ENCODE measurements at regions of chr7 and their contacts with region 1.

Region 1: DNA sequence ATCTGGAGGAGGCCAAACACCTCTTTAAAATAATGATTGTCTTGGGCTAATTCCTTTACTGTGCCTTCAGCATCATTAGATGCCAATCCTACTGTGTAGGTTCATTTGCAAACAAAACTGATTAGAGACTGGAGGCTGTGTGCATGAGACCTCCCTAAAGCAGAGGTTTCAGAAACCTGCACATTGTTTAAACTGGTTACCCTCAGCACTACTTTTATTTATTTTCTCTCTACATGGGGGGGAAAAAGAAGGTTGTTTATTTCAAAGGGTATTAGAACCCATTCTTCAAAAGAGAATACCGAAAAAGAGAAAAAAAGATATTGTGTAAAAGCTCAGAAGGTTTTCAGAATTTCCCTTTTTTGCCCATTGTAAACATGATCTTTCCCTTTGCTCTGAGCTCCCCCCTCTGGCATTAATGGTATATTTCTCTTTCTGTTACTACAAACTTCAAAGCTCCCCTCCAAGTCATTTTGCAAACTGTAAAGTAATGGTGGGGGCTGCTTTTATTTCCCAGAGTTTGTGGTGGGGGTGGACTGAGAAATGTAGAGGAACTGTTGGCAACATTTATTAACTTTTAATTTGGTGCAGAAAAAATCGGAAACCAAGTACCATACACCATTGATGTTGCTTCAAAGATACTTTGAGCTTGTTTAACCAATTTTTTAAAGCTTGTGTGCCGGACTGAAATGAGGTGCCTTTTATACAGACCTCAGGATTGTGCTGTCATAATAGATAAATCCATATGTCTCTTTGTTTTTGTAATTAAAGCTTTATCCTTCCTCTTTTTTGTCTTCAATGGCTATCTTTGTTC is 181.4 kb downstream of the EXOC4 start:
- DNase-seq: peak; percentile 49
- ATAC-seq: peak; percentile 73
- H3K4me3 ChIP-seq: no peak overlapping the region
- H3K27ac ChIP-seq: no peak overlapping the region
- H3K4me1 ChIP-seq: 0 out of 2 replicates have a peak, but pooled peaks cover 2% of the 10 kb centered on the region
- H3K27me3 ChIP-seq: no peaks in the 10 kb centered on the region
- CTCF ChIP-seq: peak; percentile 73
- POLR2A ChIP-seq: no peak
- RAD21 ChIP-seq: peak; percentile 87

Region 2: GRCh38 chr7:132709971-132710567 is 724.2 kb before region 1 on chr7:
- CTCF ChIA-PET with region 1: interaction called, 5 read pairs
- POLR2A ChIA-PET with region 1: no interaction called
- dilution Hi-C with region 1: no loop called
- in situ Hi-C with region 1: loop called (anchors 25 kb)
- intact Hi-C with region 1: loop called (anchors 1 kb)
- DNase-seq: peak; percentile 41
- ATAC-seq: peak; percentile 56
- H3K4me3 ChIP-seq: no peak overlapping the region
- H3K27ac ChIP-seq: no peak overlapping the region
- H3K4me1 ChIP-seq: no peaks in the 10 kb centered on the region
- H3K27me3 ChIP-seq: no peaks in the 10 kb centered on the region; the same call in 1 of the 2 replicates
- CTCF ChIP-seq: peak; percentile 58
- POLR2A ChIP-seq: no peak
- RAD21 ChIP-seq: peak; percentile 62

Region 3: DNA sequence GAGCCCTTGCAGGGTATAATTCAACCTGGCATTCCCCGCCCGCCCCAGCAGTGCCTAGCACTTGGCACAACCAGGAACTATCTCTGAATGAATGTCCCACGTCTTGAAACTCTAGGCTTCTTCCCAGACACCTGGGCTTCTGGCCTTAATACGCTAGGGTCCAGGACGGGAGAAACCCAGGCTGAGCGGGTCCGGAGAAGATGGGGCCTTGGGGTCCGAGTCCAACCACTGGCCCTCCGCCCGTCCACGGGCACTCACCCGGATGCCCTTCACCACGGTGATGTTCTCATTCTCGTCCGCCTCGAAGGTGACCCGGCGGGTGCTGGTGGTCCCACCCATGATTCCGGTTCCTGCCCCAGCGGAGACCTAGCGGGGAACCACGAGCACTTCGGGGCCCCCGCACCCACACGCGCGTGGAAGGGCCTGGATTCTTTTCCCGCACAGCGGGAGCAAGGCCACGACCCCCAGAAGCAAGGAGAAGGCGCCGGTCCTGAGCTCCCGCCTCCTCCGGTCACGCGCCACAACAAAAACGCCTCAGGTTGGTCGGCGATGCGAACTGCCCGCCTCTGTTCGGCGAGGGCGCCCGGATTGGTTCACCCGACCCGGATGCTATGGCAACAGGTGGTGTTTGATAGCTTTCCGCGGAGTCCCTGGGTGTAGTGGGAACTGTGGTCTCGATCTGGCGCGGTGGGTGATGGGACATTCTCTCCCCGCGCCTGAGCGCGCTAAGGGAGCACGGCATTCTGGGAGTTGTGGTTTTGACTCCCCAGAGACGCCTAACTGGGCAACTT is 352.5 kb before region 1 on chr7 and contains the start of gene CHCHD3:
- CTCF ChIA-PET with region 1: interaction called, 3 read pairs
- POLR2A ChIA-PET with region 1: no interaction called
- dilution Hi-C with region 1: no loop called
- in situ Hi-C with region 1: no loop called
- intact Hi-C with region 1: loop called (anchors 10 kb)
- DNase-seq: peak; percentile 98
- ATAC-seq: peak; percentile 99
- H3K4me3 ChIP-seq: peak within 1 kb of the TSS; percentile 79
- H3K27ac ChIP-seq: peak within 1 kb of the TSS; percentile 82
- H3K4me1 ChIP-seq: peaks cover 2% of the 10 kb centered on the region; the same call in 1 of the 2 replicates
- H3K27me3 ChIP-seq: no peaks in the 10 kb centered on the region
- CTCF ChIP-seq: no peak
- POLR2A ChIP-seq: peak; percentile 43; the same call in 1 of the 2 replicates
- RAD21 ChIP-seq: no peak
- total RNA-seq, gene CHCHD3: 122 and 141 TPM in 2 replicates

Region 4: GRCh38 chr7:133252858-133253518 is 181.3 kb before region 1 on chr7 and contains the start of gene EXOC4:
- CTCF ChIA-PET with region 1: no interaction called
- POLR2A ChIA-PET with region 1: no interaction called
- dilution Hi-C with region 1: no loop called
- in situ Hi-C with region 1: no loop called
- intact Hi-C with region 1: loop called (anchors 2 kb)
- DNase-seq: peak; percentile 97
- ATAC-seq: peak; percentile 100
- H3K4me3 ChIP-seq: peak within 1 kb of the TSS; percentile 84
- H3K27ac ChIP-seq: peak within 1 kb of the TSS; percentile 91
- H3K4me1 ChIP-seq: no peaks in the 10 kb centered on the region
- H3K27me3 ChIP-seq: no peaks in the 10 kb centered on the region
- CTCF ChIP-seq: no peak
- POLR2A ChIP-seq: peak; percentile 66
- RAD21 ChIP-seq: no peak
- total RNA-seq, gene EXOC4: 85.5 and 94.6 TPM in 2 replicates

Region 5: DNA sequence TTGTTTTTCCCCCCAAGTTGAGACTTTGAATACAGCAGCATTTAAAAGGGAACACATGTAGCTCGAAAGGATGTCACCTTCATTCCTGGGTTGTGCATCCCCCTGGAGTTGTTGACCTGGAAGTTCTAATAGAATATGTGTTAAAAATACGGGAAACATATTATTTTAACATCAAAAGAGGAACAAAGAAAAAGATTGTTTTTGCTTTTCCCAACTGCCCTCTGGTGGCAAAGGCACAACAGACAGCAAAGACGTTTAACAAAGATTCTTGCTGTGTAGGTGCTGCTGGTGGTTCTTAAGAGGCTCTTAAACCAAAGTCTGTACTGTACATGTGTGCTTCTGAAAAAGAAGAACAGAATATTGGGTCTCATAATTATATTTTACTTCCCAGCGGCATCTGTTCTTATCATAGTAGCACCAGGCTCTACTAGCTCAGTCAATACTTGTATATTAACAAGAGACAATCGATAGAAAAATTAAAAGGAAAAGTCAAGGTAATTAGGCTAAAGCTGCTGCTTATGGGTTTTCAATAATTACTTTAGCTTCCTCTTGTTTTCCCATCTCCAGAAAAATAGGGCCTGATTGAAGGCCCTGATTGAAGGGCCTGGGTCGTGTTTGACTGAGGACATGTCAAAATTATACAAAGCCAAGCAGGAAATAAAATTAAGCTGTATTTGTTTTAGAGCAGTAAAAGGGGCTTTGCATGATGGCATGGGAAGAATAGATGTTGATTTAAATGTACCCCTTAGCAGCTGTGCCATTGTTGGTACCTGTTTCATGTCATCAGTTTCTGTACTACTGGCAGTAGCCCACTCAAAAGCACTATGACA is 308.7 kb after region 1 on chr7:
- CTCF ChIA-PET with region 1: interaction called, 3 read pairs
- POLR2A ChIA-PET with region 1: no interaction called
- dilution Hi-C with region 1: no loop called
- in situ Hi-C with region 1: no loop called
- intact Hi-C with region 1: loop called (anchors 1 kb)
- DNase-seq: peak; percentile 36
- ATAC-seq: peak; percentile 32; the same call in 1 of the 2 replicates
- H3K4me3 ChIP-seq: no peak overlapping the region
- H3K27ac ChIP-seq: no peak overlapping the region
- H3K4me1 ChIP-seq: no peaks in the 10 kb centered on the region
- H3K27me3 ChIP-seq: no peaks in the 10 kb centered on the region
- CTCF ChIP-seq: peak; percentile 52
- POLR2A ChIP-seq: no peak
- RAD21 ChIP-seq: peak; percentile 62

Region 6: DNA sequence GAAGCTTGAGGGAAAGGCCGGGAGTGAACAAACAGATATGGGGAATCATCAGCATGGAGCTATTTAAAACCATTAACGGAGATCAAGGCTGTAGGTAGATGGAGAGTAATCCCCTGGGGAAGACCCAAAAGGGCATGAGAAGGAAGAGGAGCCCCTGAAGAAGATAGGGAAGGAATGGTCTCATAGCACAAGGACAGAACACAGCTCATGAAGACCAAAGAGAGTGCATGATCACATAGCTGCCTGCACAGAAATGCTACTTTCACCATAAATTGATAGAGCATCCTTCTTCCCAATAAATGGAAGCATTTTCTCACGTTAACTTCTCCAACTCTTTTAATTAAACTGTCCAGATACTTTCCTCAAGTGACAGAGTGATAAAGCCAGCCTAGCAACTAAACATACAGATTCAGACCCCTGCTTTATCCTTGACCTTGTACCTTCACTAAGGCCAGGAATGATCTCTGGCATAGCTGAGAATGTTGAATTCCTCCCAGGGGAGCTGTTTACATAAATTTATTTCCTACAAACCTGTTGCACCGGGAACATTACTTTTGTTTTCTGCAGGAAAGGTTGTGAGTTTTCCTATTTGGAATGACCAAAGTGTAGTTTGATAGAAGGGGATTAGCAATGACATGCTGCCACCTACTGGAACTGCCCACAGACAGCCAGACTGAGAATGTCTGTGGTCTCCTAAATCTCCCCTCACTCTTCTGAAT is 582.1 kb after region 1 on chr7:
- CTCF ChIA-PET with region 1: no interaction called
- POLR2A ChIA-PET with region 1: no interaction called
- dilution Hi-C with region 1: no loop called
- in situ Hi-C with region 1: no loop called
- intact Hi-C with region 1: loop called (anchors 2 kb)
- DNase-seq: peak; percentile 39
- ATAC-seq: peak; percentile 77
- H3K4me3 ChIP-seq: no peak overlapping the region
- H3K27ac ChIP-seq: no peak overlapping the region
- H3K4me1 ChIP-seq: no peaks in the 10 kb centered on the region
- H3K27me3 ChIP-seq: no peaks in the 10 kb centered on the region
- CTCF ChIP-seq: peak; percentile 67
- POLR2A ChIP-seq: no peak
- RAD21 ChIP-seq: peak; percentile 76